ENCODE measurements at regions of chr20 and their contacts with region 1.

Region 1: DNA sequence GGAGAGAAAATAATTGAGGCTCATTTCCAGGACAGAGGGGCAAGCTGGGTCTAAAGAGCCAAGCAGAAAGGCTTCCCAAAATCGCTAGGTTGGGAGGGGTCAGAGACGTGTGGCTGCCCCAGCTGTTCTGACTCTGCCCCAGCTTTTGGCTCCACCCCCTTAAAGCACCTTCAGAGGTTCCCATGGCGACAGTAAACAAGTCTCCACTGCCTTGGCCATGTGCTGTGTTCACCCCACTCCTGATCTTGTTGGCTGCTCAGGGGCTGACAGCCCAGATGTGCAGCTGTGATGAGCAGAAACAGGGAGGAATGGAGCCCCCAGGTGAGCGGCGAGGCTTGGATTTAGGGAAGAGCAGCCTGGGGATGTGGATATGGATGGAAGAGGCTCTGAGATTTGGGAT is 72.7 kb upstream of the SPTLC3 start:
- DNase-seq: no peak
- ATAC-seq: no peak
- H3K4me3 ChIP-seq: no peak overlapping the region
- H3K27ac ChIP-seq: no peak overlapping the region
- H3K4me1 ChIP-seq: no peaks in the 10 kb centered on the region
- H3K27me3 ChIP-seq: no peaks in the 10 kb centered on the region
- CTCF ChIP-seq: no peak
- POLR2A ChIP-seq: no peak

Region 2: DNA sequence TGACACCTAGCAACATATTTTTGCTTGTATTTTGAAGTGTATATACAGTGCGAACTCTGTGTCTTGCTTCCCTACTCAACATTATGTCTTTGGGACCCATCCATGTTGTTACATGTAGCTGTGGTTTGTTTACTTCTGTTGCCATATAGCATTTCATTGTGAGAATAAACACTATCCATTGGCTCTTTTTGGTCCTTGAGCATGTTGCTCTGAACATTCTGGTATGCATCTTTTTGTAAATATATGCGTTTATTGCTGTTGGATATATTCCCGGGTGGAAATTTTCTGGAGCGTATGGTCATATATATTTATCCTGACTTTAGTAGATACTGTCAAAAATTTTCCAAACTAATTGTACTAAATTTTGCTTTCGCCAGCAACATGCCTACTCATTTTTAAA is 149.8 kb before region 1 on chr20:
- in situ Hi-C with region 1: no loop called
- intact Hi-C with region 1: no loop called
- DNase-seq: no peak
- ATAC-seq: no peak
- H3K4me3 ChIP-seq: no peak overlapping the region
- H3K27ac ChIP-seq: no peak overlapping the region
- H3K4me1 ChIP-seq: no peaks in the 10 kb centered on the region
- H3K27me3 ChIP-seq: no peaks in the 10 kb centered on the region
- CTCF ChIP-seq: no peak
- POLR2A ChIP-seq: no peak

Region 3: DNA sequence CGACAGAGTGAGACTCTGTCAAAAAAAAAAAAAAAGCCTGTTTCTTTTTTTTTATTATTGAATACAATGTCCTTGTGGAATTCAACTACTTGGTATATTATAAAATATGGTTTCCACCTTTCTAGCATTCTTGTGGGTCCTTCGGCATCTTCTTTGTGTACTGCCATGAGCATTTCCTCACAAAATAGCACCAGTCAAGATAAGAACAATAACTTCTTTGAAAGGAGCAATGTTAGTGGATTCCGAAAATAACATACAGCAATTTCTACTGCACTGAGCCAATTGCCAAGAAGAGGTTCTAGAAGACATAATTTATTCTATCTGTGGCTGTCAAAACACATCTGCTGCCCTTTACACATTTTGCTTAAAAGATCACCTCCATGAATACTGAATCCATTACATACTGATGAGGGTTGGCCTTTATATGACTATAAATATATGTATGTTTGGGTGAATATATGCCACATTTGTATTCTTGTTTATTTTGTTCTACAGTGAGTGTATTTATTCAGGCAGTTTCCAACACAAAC is 53.6 kb after region 1 on chr20:
- in situ Hi-C with region 1: loop called in 1 of 4 experiments (anchors 10 kb)
- intact Hi-C with region 1: no loop called
- DNase-seq: no peak
- ATAC-seq: no peak
- H3K4me3 ChIP-seq: no peak overlapping the region
- H3K27ac ChIP-seq: no peak overlapping the region
- H3K4me1 ChIP-seq: no peaks in the 10 kb centered on the region
- H3K27me3 ChIP-seq: no peaks in the 10 kb centered on the region
- CTCF ChIP-seq: no peak
- POLR2A ChIP-seq: no peak